Activated CD4-positive, alpha-beta T cell treated with anti-CD3 and anti-CD28 coated beads, Interleukin-2, amount 10 ng/mL, durations not matched to agents 24 days and 14 days (primary cell): ENCODE measurements at regions of chr1 and their contacts with region 1.

Region 1: DNA sequence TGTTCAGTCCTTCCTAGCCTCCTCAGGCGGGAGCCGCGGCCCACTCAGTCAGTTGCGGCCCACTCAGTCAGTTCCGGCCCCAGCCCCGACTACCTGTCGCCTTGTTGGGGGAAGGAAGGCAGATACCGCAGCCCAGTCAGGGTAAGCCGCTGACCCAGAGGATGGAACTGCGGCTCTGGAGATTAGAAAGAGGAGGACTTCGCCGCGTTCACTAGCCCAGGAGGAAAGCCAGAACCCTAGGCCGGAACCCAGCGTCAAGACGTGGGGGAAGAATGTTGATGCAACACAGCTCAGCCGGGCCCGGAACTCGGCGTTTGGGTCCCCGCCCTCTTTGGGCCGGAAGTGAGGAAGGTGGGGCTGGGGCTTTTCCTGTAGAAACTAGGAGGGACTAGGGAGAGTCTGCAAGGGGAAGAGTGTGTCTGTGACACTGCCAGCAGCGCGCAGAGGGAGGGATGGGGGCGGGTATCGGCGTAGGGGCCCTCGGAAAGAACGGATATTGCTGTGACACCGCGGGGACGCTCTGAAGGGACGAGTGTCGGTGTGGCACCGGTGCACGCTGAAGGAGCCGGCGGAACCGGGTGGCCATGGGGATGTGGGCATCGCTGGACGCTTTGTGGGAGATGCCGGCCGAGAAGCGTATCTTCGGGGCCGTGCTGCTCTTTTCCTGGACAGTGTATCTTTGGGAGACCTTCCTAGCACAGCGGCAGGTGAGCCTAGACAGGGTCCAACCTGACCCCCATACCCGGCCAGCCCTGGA is at the start of gene ZMPSTE24:
- DNase-seq: peak; percentile 98
- H3K4me3 Mint-ChIP-seq: peak within 1 kb of the TSS; percentile 87
- H3K27ac Mint-ChIP-seq: peak within 1 kb of the TSS; percentile 99
- H3K4me1 Mint-ChIP-seq: peaks cover 31% of the 10 kb centered on the region
- H3K27me3 Mint-ChIP-seq: no peaks in the 10 kb centered on the region
- total RNA-seq, gene ZMPSTE24: 50.4 and 50.8 TPM in 2 replicates

Region 2: GRCh38 chr1:40224040-40224439 is 33.8 kb before region 1 on chr1:
- intact Hi-C with region 1: loop called (anchors 5 kb)
- DNase-seq: no peak
- H3K4me3 Mint-ChIP-seq: no peak overlapping the region
- H3K27ac Mint-ChIP-seq: peak overlapping the region; percentile 53
- H3K4me1 Mint-ChIP-seq: peaks cover 24% of the 10 kb centered on the region
- H3K27me3 Mint-ChIP-seq: no peaks in the 10 kb centered on the region

Region 3: DNA sequence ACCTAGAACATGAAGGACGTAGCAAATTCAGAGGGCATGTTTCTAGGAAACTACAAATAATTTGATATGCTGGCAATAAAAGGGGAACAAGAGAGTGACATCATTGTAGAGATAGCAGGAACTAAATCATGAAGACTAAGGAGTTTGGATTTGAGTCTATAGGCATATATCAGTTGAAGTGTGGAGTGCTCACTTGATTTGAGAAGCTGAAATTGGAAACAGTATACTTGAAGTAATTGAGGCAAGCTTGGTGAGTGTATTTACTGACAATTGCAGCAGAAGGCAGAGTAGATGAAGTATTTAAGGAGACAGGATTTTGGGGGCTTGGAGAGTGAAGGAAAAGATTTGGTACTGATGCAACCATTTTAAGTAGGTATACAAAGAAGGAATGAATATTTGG is 16.5 kb before region 1 on chr1:
- intact Hi-C with region 1: loop called (anchors 1 kb)
- DNase-seq: no peak
- H3K4me3 Mint-ChIP-seq: peak overlapping the region; percentile 54
- H3K27ac Mint-ChIP-seq: peak overlapping the region; percentile 87
- H3K4me1 Mint-ChIP-seq: peaks cover 57% of the 10 kb centered on the region
- H3K27me3 Mint-ChIP-seq: no peaks in the 10 kb centered on the region

Region 4: GRCh38 chr1:40299366-40300248 is 41.7 kb after region 1 on chr1:
- intact Hi-C with region 1: no loop called
- DNase-seq: no peak
- H3K4me3 Mint-ChIP-seq: no peak overlapping the region
- H3K27ac Mint-ChIP-seq: no peak overlapping the region
- H3K4me1 Mint-ChIP-seq: no peaks in the 10 kb centered on the region
- H3K27me3 Mint-ChIP-seq: no peaks in the 10 kb centered on the region

Region 5: DNA sequence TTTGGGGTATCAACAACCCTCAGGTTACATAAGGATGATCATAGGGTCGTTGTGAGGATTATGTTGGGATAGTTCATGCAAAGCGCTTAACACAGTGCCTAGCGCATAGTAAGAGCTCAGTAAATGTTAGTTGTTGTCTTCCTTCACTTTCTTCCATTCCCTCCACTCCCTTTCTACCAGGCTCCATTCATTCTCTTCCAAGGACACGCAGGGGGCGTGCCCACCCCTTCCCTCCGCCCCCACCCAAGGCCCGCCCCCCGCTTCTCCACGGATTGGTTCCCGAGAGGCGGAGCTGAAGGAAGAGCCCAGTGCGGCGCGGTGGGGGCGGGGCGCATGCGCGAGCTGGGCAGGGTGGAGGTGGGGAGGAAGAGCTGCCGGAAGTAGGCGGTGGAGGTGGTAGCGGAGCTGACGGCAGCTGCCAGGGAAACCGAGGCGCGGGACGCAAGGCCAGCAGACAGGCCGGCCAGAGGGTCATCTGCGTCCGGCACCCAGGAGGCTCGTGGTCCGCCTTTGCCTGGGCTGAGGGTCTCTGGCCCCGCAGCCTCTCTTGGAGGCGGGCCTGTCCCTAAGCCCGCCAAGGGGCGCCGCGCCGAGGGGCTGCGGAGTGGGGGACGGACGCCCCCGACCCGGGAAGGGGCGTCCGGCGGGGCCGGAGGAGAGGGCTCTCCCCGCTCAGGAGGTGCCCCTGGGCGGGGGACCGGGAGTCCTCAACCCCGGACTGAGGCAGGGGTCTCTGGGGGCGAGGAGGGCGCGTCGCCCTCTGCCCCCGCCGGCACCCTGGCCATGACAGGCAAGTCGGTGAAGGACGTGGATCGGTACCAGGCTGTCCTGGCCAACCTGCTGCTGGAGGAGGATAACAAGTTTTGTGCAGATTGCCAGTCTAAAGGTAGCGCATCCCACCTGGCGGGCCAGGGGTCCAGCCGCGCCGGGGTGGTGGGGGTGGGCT is 115.7 kb after region 1 on chr1 and contains the start of gene SMAP2:
- intact Hi-C with region 1: loop called (anchors 5 kb)
- DNase-seq: peak; percentile 99
- H3K4me3 Mint-ChIP-seq: peak within 1 kb of the TSS; percentile 96
- H3K27ac Mint-ChIP-seq: peak within 1 kb of the TSS; percentile 99
- H3K4me1 Mint-ChIP-seq: peaks cover 45% of the 10 kb centered on the region
- H3K27me3 Mint-ChIP-seq: no peaks in the 10 kb centered on the region
- total RNA-seq, gene SMAP2: 156 and 157 TPM in 2 replicates